HepG2 (cell line): ENCODE measurements at regions of chr19 and their contacts with region 1.

Region 1: DNA sequence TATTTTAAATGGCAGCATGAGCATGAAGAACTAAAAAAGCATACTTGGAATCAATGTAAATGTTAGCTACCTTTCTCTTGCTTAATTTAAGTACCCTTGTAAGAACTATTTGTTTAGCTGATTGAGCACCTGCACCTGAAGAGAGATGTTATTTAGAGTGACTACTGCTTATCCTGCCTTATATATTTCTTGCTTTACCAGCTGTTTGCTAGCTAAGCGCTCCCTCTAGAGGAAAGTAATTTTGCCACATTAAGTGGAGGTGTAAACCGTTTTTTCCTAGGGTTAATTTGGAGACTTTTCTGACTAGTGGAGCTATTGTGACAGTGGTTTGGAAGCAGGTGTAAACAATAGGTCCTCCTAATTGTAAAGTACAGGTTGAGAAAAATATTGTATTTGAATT is 19.4 kb upstream of the PSG2 start:
- DNase-seq: no peak
- ATAC-seq: no peak
- H3K4me3 ChIP-seq: no peak overlapping the region
- H3K27ac ChIP-seq: no peak overlapping the region
- H3K4me1 ChIP-seq: no peaks in the 10 kb centered on the region
- H3K27me3 ChIP-seq: no peaks in the 10 kb centered on the region
- CTCF ChIP-seq: no peak
- EP300 ChIP-seq: no peak
- POLR2A ChIP-seq: no peak
- RAD21 ChIP-seq: no peak

Region 2: GRCh38 chr19:43152217-43152616 is 50.3 kb after region 1 on chr19:
- CTCF ChIA-PET with region 1: no interaction called
- POLR2A ChIA-PET with region 1: no interaction called
- in situ Hi-C with region 1: no loop called
- intact Hi-C with region 1: no loop called
- DNase-seq: no peak
- ATAC-seq: no peak
- H3K4me3 ChIP-seq: no peak overlapping the region
- H3K27ac ChIP-seq: no peak overlapping the region
- H3K4me1 ChIP-seq: no peaks in the 10 kb centered on the region
- H3K27me3 ChIP-seq: no peaks in the 10 kb centered on the region; a peak in 1 of 5 replicates
- CTCF ChIP-seq: no peak
- EP300 ChIP-seq: no peak
- POLR2A ChIP-seq: no peak
- RAD21 ChIP-seq: no peak

Region 3: GRCh38 chr19:43191191-43191590 is 89.2 kb after region 1 on chr19:
- CTCF ChIA-PET with region 1: interaction called, 13 read pairs
- POLR2A ChIA-PET with region 1: no interaction called
- in situ Hi-C with region 1: no loop called
- intact Hi-C with region 1: loop called (anchors 10 kb)
- DNase-seq: no peak
- ATAC-seq: no peak
- H3K4me3 ChIP-seq: no peak overlapping the region
- H3K27ac ChIP-seq: no peak overlapping the region
- H3K4me1 ChIP-seq: no peaks in the 10 kb centered on the region
- H3K27me3 ChIP-seq: no peaks in the 10 kb centered on the region; a peak in 1 of 5 replicates
- CTCF ChIP-seq: no peak
- EP300 ChIP-seq: no peak
- POLR2A ChIP-seq: no peak
- RAD21 ChIP-seq: no peak